RWPE1 (cell line): ENCODE measurements at regions of chr1 and their contacts with region 1.

Region 1: GRCh38 chr1:226121587-226122400 is 59.3 kb downstream of the H3-3A start:
- DNase-seq: peak; percentile 89
- H3K27ac ChIP-seq: peak overlapping the region; percentile 94
- CTCF ChIP-seq: peak; percentile 96

Region 2: GRCh38 chr1:225651376-225651871 is 470.4 kb before region 1 on chr1:
- CTCF ChIA-PET with region 1: no interaction called
- POLR2A ChIA-PET with region 1: no interaction called
- DNase-seq: peak; percentile 55
- H3K27ac ChIP-seq: no peak overlapping the region
- CTCF ChIP-seq: no peak

Region 3: GRCh38 chr1:226109829-226110248 is 12.0 kb before region 1 on chr1:
- CTCF ChIA-PET with region 1: interaction called, 29 read pairs
- POLR2A ChIA-PET with region 1: interaction called, 3 read pairs
- DNase-seq: peak; percentile 97
- H3K27ac ChIP-seq: peak overlapping the region; percentile 97
- CTCF ChIP-seq: 0 out of 2 replicates have a peak, but pooled peaks have one; percentile 9

Region 4: DNA sequence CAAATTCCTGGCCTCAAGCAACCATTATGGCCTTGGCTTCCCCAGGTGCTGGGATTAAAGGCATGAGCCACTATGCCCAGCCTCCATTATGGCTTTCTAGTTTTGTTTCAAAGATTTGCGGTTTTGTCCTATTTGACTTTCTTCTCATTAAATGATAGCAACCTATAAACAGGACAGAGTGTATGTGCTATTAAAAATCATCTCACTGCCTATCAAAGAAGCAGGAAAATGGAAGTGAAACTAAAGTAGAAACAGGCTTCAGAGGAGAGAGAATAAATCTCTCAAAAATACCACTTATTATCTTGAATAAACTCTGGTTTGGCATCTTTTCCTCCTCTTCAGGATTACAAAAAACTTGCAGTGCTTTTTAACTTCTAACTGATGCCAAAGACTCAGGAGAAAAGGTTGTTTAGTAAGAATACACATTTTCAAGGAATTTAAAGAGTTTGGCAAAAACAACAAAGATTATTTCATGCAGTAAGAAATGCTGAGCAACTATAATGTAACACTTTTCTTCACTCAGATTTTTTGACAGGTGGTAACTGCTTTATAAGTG is 36.0 kb after region 1 on chr1:
- CTCF ChIA-PET with region 1: interaction called, 13 read pairs
- POLR2A ChIA-PET with region 1: no interaction called
- DNase-seq: no peak
- H3K27ac ChIP-seq: no peak overlapping the region
- CTCF ChIP-seq: no peak

Region 5: DNA sequence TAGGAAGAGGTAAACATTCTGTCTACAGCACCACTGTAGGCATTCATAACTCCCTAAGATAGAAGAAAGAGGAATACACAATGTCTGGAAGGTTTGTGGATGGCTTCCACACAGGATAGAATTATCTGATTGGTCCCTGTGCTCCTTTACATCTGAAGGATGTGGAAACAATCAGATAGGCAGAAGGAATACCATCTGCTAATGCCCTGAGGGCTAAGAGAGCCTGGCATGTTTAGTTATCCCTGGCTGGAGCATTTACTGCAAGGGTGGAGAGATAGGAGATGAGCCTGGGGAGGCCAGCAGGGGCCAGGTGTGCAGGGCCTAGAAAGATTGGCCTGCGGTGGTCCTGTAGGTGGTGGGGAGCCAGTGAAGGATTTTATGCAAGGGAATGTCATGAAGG is 73.3 kb after region 1 on chr1:
- CTCF ChIA-PET with region 1: interaction called, 75 read pairs
- POLR2A ChIA-PET with region 1: interaction called, 5 read pairs
- DNase-seq: no peak
- H3K27ac ChIP-seq: no peak overlapping the region
- CTCF ChIP-seq: no peak

Region 6: GRCh38 chr1:226293553-226293920 is 171.7 kb after region 1 on chr1:
- CTCF ChIA-PET with region 1: no interaction called
- POLR2A ChIA-PET with region 1: no interaction called
- DNase-seq: no peak
- H3K27ac ChIP-seq: no peak overlapping the region
- CTCF ChIP-seq: no peak

Region 7: DNA sequence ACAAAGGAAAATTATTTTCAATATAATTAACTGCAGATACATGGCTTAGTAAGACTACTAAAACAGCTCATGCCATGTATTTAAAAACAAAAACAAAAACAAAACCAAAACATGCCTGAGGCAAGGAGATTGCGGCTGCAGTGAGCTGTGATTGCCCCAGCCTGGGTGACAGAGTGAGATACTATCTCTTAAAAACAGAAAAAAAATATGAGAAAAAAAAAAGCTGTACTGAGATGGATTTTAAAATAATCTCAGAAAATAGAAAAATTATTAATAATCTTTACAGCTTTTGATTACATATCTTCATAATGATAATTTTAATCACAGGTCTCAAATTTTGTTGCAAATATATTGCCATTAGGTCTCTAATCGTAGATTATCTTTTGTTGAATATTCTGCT is 211.2 kb after region 1 on chr1:
- CTCF ChIA-PET with region 1: interaction called, 12 read pairs
- POLR2A ChIA-PET with region 1: interaction called, 7 read pairs
- DNase-seq: no peak
- H3K27ac ChIP-seq: no peak overlapping the region
- CTCF ChIP-seq: no peak

Region 8: DNA sequence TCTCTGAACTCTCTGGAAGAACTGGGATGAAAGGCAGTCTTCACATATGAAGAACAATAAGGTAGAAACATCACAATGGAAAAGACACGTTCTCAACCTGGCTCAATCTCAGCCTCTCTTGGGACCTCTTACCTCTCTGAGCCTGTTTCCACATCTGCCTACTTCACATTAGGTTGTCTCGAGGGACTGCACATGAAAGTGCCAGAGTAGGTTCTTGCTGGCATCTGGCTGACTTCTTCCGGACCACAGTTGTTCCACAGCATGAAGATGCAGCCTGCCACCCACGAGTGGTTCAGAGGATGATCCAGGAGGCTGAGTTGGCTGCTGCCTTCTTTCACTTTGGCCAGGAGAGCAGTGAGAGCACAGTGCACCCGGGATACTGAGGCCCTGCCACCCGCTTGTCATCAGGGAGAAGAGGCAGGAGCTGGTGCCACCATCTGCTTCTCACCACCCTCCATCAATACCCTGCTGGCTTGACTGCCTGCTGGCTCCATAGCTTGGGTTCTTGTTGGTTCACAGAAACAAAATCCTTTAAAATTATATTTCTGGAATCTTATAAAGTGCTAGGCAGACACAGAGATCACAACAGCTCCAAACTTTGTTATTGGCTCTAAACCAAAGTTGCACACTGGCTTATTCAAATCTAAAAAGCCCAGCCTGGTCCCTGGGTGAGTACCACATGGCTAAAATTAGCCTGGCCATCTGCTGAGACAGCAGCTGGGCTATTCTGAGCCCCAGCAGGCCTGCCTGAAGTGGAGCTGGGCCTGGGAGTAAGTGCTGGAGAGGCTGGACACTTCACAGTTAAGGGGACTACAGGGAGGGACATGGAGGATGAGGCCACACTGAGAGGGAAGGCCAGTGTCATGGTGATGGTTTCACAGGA is 234.1 kb after region 1 on chr1:
- CTCF ChIA-PET with region 1: no interaction called
- POLR2A ChIA-PET with region 1: no interaction called
- DNase-seq: no peak
- H3K27ac ChIP-seq: no peak overlapping the region
- CTCF ChIP-seq: no peak